Activated CD8-positive, alpha-beta T cell treated with anti-CD3 and anti-CD28 coated beads, Interleukin-2, amount 10 ng/mL, durations not matched to agents 7 days and 5 days (primary cell): ENCODE measurements at regions of chr1 and their contacts with region 1.

Region 1: DNA sequence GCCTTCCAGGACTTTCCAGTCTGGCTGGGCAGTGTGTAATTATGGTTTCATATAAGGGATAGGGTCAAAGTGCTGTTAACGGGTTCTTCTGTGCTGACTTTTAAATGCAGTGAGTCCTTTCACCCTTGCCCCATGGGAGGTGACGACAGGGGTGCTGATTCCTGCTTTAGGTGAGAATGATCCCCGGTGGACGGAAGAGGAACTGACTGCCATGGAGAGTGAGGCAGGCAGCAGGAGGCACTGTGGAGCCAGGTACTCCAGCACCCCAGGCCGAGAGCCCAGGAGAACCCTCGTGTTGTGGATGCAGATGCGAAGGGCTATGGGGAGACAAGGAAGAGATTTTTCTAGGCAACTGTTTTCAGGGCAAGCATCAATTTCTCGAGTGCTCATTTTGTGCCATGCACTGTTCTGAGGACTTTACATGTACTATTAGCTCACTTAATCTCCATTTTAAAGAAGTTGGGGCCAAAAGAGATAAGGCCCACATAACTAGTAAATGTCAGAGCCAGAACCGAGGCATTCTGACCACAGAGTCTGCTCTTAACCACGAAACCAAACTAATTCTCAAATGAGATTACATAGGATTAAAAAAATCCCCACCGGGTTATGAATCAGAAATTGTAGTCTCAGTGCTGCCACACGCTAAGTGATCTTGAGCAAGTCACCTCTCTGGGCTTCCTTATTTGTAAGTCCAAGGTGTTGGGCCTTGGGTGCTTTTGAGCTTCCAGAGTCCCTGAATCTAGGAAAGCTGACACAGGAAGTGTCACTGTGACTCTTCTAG is 28.2 kb downstream of the STPG1 start:
- DNase-seq: peak; percentile 46
- ATAC-seq: peak; percentile 59
- H3K4me3 Mint-ChIP-seq: no peak overlapping the region
- H3K27ac Mint-ChIP-seq: peak overlapping the region; percentile 26
- H3K4me1 Mint-ChIP-seq: peaks cover 27% of the 10 kb centered on the region
- H3K27me3 Mint-ChIP-seq: no peaks in the 10 kb centered on the region

Region 2: GRCh38 chr1:24070821-24071393 is 314.4 kb before region 1 on chr1:
- CTCF ChIA-PET with region 1: interaction called, 10 read pairs
- POLR2A ChIA-PET with region 1: no interaction called
- DNase-seq: peak; percentile 81
- ATAC-seq: peak; percentile 88
- H3K4me3 Mint-ChIP-seq: no peak overlapping the region
- H3K27ac Mint-ChIP-seq: no peak overlapping the region
- H3K4me1 Mint-ChIP-seq: peaks cover 2% of the 10 kb centered on the region
- H3K27me3 Mint-ChIP-seq: peaks cover 6% of the 10 kb centered on the region

Region 3: DNA sequence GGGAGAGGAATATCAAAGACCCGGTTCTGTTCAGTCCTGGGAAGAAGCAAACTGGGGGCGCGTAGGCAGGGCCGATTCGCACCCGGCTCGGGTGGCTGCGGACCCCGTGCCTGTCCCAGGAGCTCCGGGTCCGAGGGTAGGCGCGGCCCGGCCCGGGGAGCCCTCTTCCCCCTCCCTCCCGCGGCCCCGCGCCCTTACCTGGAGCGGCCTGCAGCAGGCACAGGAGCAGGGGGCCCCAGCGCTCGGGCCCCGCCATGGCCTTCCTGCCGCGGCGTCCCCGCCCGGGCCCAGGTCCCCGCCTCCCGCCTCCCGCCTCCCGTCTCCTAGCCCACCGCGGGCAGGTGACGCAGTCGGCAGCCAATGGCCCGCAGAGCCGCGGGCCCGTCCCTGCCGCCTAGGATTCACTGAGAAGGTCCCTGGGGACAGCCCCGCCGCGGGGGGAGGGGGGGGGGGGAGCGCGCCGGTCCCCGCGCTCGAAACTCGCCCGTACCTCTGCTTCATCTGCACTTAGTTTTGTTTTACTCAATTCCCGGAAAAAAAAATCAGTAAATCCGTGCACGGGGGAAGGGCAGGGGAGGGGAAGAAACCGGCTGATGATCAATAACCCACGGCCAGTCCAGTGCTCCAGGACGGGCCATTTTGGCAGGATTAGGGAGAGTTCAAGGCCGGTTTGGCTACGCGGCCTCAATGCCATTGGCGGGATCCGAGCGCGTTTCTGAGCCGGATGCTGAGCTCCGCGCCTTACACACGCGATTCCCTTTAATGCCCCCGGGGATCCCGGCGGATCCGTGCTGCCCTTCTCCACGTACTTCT is 198.2 kb before region 1 on chr1 and contains the start of gene IFNLR1:
- CTCF ChIA-PET with region 1: interaction called, 100 read pairs
- POLR2A ChIA-PET with region 1: no interaction called
- DNase-seq: peak; percentile 75
- ATAC-seq: peak; percentile 89
- H3K4me3 Mint-ChIP-seq: peak within 1 kb of the TSS; percentile 76
- H3K27ac Mint-ChIP-seq: peak within 1 kb of the TSS; percentile 61
- H3K4me1 Mint-ChIP-seq: peaks cover 50% of the 10 kb centered on the region
- H3K27me3 Mint-ChIP-seq: no peaks in the 10 kb centered on the region
- total RNA-seq, gene IFNLR1: 2.6 to 4.0 TPM

Region 4: DNA sequence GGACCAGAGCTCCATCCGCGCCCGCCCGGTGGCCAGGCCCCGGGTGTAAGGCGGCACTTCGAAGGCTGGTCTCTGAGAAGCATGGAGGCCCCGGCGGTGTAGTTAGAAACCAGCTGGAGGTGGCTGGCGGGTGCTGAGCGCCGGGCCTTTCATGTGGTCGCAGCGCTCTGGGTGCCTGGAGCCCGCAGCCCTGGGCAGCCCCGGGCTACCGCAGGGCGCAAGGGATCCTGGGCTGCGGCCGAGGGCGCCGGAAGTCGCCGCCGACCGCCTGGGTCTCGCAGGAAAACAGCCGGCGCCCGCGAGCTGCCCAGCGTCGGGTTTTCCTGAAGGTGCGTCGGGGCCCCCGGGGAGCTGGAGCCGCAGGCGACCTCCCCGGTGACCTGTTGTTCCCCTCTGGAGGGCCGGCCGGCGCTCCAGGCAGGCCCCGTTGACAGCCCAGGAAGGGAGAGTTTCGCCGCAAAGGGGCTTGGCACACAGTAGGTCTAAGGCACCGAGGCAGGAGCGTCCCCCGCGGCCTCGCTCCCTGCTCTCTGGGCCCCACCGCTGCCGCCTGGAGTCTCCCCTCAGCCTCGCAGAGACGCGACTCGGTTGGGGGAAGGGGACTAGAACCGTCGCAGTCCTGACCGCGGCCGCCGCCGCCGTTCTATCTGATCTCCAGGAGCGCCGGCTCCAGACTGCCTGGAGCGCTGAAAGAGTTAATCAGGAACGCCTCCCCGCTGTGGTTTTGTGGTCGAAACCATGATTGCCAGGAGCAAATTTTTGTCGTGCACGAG is 63.5 kb before region 1 on chr1:
- CTCF ChIA-PET with region 1: interaction called, 41 read pairs
- POLR2A ChIA-PET with region 1: no interaction called
- DNase-seq: peak; percentile 79
- ATAC-seq: peak; percentile 81
- H3K4me3 Mint-ChIP-seq: peak overlapping the region; percentile 62
- H3K27ac Mint-ChIP-seq: peak overlapping the region; percentile 68
- H3K4me1 Mint-ChIP-seq: peaks cover 42% of the 10 kb centered on the region
- H3K27me3 Mint-ChIP-seq: peaks cover 88% of the 10 kb centered on the region